Naive thymus-derived CD4-positive, alpha-beta T cell (primary cell): ENCODE measurements at regions of chr15 and their contacts with region 1.

Region 1: GRCh38 chr15:88467073-88467934 is at the starts of genes MRPL46 and MRPS11:
- DNase-seq: peak; percentile 78 to 94 (median 91)
- ATAC-seq: peak; percentile 97
- H3K4me3 ChIP-seq: peak within 1 kb of the TSS; percentile 75
- H3K4me3 Mint-ChIP-seq: peak within 1 kb of the TSS; percentile 87 to 98 (median 97)
- H3K27ac ChIP-seq: peak within 1 kb of the TSS; percentile 95
- H3K27ac Mint-ChIP-seq: peak within 1 kb of the TSS; percentile 96 to 99 (median 98)
- H3K4me1 ChIP-seq: peaks cover 0 to 19% of the 10 kb centered on the region in 2 donors
- H3K4me1 Mint-ChIP-seq: peaks cover 18 to 42% (median 29%) of the 10 kb centered on the region in 7 donors
- H3K27me3 ChIP-seq: no peaks in the 10 kb centered on the region
- H3K27me3 Mint-ChIP-seq: no peaks in the 10 kb centered on the region
- total RNA-seq, gene MRPL46: 9.2 to 32.1 (median 28.5) TPM
- total RNA-seq, gene MRPS11: 12.8 to 55.7 (median 24.0) TPM

Region 2: GRCh38 chr15:88077296-88078020 is 389.8 kb before region 1 on chr15:
- CTCF ChIA-PET with region 1: no interaction called
- POLR2A ChIA-PET with region 1: no interaction called
- intact Hi-C with region 1: no loop called
- DNase-seq: no peak
- ATAC-seq: no peak
- H3K4me3 ChIP-seq: no peak overlapping the region
- H3K4me3 Mint-ChIP-seq: no peak overlapping the region
- H3K27ac ChIP-seq: no peak overlapping the region
- H3K27ac Mint-ChIP-seq: no peak overlapping the region
- H3K4me1 ChIP-seq: no peaks in the 10 kb centered on the region
- H3K4me1 Mint-ChIP-seq: no peaks in the 10 kb centered on the region
- H3K27me3 ChIP-seq: no peaks in the 10 kb centered on the region
- H3K27me3 Mint-ChIP-seq: peaks cover 0 to 15% (median 6%) of the 10 kb centered on the region in 5 donors

Region 3: DNA sequence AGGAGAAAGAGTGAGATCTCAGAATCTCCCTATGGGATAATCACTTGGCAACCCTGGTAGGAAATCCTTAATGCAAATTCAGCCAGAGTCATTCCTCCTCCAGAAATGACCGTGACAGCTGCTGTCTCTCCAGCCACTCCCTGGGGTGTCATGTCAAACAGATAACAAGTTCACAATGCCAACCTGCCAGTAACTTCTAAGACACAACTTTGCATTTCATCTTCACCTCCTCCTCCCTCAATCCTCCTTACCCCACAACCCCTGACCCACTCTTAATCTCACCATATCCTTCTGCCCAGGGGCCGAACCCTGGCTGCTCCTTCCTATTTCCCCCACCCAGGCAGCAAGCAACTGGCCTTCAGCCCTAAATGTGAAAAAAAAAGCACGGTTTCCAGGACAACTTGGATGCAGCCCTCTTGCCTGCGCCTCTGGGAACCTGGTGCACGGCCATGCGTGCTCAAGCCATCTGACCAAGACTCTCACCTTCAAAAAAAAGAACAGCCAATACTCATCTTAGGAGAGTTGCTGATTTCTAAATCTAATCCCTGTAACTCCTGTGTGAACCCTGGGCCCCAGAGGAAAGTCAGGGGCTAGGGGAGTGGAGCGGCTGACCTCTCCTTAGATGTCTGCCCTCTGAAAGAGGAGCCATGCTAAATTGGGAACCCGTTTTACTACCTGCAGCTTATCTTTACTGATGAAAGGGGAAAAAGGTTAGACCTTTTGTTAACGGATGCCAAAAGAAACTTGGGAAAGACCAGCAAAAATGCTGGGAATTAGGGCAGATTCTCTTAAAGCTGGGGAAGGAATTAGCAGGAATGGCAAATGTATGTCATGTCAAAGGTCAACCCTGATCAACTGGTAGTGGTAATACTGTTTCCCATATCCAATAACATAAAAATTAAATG is 376.6 kb before region 1 on chr15:
- CTCF ChIA-PET with region 1: no interaction called
- POLR2A ChIA-PET with region 1: no interaction called
- intact Hi-C with region 1: no loop called
- DNase-seq: no peak
- ATAC-seq: no peak
- H3K4me3 ChIP-seq: no peak overlapping the region
- H3K4me3 Mint-ChIP-seq: no peak overlapping the region
- H3K27ac ChIP-seq: no peak overlapping the region
- H3K27ac Mint-ChIP-seq: no peak overlapping the region
- H3K4me1 ChIP-seq: no peaks in the 10 kb centered on the region
- H3K4me1 Mint-ChIP-seq: no peaks in the 10 kb centered on the region
- H3K27me3 ChIP-seq: peaks cover 0 to 5% of the 10 kb centered on the region in 2 donors
- H3K27me3 Mint-ChIP-seq: peaks cover 0 to 13% (median 10%) of the 10 kb centered on the region in 5 donors

Region 4: GRCh38 chr15:88454867-88455810 is 12.2 kb before region 1 on chr15:
- CTCF ChIA-PET with region 1: interaction called, 4 read pairs
- POLR2A ChIA-PET with region 1: interaction called, 10 read pairs
- intact Hi-C with region 1: loop called in 1 of 2 experiments (anchors 1 kb)
- DNase-seq: peak in 6 of 9 donors; percentile 14 to 38 (median 26)
- ATAC-seq: peak; percentile 85
- H3K4me3 ChIP-seq: no peak overlapping the region
- H3K4me3 Mint-ChIP-seq: no peak overlapping the region
- H3K27ac ChIP-seq: no peak overlapping the region
- H3K27ac Mint-ChIP-seq: peak overlapping the region in 4 of 9 donors; percentile 10 to 72 (median 54)
- H3K4me1 ChIP-seq: no peaks in the 10 kb centered on the region
- H3K4me1 Mint-ChIP-seq: peaks cover 1 to 9% (median 4%) of the 10 kb centered on the region in 7 donors
- H3K27me3 ChIP-seq: no peaks in the 10 kb centered on the region
- H3K27me3 Mint-ChIP-seq: no peaks in the 10 kb centered on the region

Region 5: DNA sequence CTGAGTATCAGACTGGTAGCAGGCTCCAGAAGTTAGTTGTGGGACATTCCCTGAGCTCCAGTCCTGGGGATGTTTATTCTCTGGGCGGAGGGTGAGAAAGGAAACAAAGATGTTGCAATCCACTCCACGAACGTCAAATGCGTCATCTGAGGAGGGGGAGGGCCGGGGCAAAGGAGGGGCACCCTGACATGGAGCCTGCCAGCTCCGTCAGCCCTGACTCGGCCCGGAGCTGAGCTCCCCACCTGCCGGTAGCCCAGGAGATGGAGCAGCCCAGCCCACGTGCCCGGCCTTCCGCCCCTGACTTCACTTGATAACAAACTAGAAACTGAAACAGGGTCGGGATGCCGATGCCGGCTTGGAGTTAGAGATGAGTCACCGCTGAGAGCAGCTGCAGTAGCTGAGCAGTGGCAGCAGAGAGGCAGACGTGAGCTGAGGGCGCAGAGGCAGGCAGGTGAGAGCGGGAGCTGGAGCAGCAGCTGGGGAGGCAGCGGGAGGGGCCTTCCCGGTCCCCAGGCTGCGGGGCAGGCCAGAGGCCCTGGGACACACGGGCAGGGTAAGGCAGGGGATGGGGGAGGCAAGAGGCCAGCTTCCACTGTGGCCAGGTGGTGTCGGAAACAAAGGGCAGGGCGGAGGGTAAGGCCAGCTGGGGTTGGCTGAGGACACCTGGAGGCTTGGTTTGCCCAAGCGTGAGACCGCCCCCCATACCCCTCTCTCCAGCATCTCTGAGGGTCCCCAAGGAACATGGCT is 171.5 kb after region 1 on chr15 and contains the start of gene ISG20:
- CTCF ChIA-PET with region 1: no interaction called
- POLR2A ChIA-PET with region 1: interaction called, 11 read pairs
- intact Hi-C with region 1: loop called (anchors 1 kb)
- DNase-seq: peak; percentile 84 to 100 (median 99)
- ATAC-seq: peak; percentile 94
- H3K4me3 ChIP-seq: peak within 1 kb of the TSS; percentile 70
- H3K4me3 Mint-ChIP-seq: peak within 1 kb of the TSS; percentile 83 to 99 (median 94)
- H3K27ac ChIP-seq: peak within 1 kb of the TSS; percentile 99
- H3K27ac Mint-ChIP-seq: peak within 1 kb of the TSS; percentile 96 to 100 (median 99)
- H3K4me1 ChIP-seq: peaks cover 76 to 81% of the 10 kb centered on the region in 2 donors
- H3K4me1 Mint-ChIP-seq: peaks cover 58 to 87% (median 80%) of the 10 kb centered on the region in 7 donors
- H3K27me3 ChIP-seq: no peaks in the 10 kb centered on the region
- H3K27me3 Mint-ChIP-seq: peaks cover 0 to 2% (median 0%) of the 10 kb centered on the region in 5 donors
- total RNA-seq, gene ISG20: 92.5 to 160 (median 149) TPM

Region 6: GRCh38 chr15:88904624-88905327 is 437.5 kb after region 1 on chr15:
- CTCF ChIA-PET with region 1: no interaction called
- POLR2A ChIA-PET with region 1: no interaction called
- intact Hi-C with region 1: loop called in 1 of 2 experiments (anchors 2 kb)
- DNase-seq: peak; percentile 79 to 99 (median 98)
- ATAC-seq: peak; percentile 99
- H3K4me3 ChIP-seq: no peak overlapping the region
- H3K4me3 Mint-ChIP-seq: peak overlapping the region; percentile 16 to 78 (median 54)
- H3K27ac ChIP-seq: peak overlapping the region; percentile 70
- H3K27ac Mint-ChIP-seq: peak overlapping the region; percentile 76 to 98 (median 94)
- H3K4me1 ChIP-seq: peaks cover 19 to 37% of the 10 kb centered on the region in 2 donors
- H3K4me1 Mint-ChIP-seq: peaks cover 23 to 65% (median 52%) of the 10 kb centered on the region in 7 donors
- H3K27me3 ChIP-seq: no peaks in the 10 kb centered on the region
- H3K27me3 Mint-ChIP-seq: no peaks in the 10 kb centered on the region

Region 7: DNA sequence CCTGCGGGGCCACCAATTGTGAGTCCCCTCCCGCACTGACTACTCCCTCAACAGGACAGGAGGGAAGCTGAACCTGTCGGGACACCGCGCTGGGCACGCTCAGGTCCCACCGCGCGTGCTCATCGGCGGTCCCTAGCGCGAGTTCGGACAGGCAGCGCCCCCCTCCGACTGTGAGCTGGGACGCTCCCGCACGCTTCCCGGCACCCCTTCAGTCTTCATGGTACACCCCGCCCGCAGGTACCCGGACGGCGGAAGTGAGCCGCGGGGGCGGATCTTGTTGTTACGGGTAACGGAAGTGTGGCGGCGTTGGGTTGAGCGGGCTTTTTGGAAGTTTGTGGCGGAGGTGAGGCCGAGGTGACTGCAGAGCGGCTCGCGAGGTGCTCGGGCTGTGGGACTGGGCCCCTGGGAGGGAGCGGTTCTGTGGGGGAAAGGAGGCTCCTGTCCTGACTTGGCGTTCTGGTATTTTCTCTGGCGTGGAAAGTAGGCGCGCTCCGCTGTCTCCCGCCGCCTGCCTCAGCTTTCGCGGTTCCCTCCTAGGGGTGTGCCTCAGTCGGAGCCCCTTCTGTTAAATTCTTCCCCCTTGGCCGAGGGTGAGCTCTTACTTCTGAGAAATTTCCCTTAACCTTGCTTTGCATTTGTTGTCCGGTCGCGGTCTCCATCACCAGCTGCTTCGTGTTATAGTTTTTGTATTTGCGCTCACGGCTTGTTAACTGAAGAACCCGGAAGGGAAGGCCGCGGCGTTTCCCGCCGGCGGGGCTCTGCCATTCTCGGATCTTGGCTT is 776.6 kb after region 1 on chr15 and contains the start of gene FANCI:
- CTCF ChIA-PET with region 1: no interaction called
- POLR2A ChIA-PET with region 1: no interaction called
- intact Hi-C with region 1: loop called in 1 of 2 experiments (anchors 2 kb)
- DNase-seq: peak; percentile 89 to 97 (median 94)
- ATAC-seq: peak; percentile 100
- H3K4me3 ChIP-seq: peak within 1 kb of the TSS; percentile 79
- H3K4me3 Mint-ChIP-seq: peak within 1 kb of the TSS; percentile 86 to 98 (median 94)
- H3K27ac ChIP-seq: peak within 1 kb of the TSS; percentile 65
- H3K27ac Mint-ChIP-seq: peak within 1 kb of the TSS; percentile 78 to 96 (median 84)
- H3K4me1 ChIP-seq: peaks cover 6 to 13% of the 10 kb centered on the region in 2 donors
- H3K4me1 Mint-ChIP-seq: peaks cover 20 to 40% (median 26%) of the 10 kb centered on the region in 7 donors
- H3K27me3 ChIP-seq: no peaks in the 10 kb centered on the region
- H3K27me3 Mint-ChIP-seq: peaks cover 0 to 8% (median 0%) of the 10 kb centered on the region in 5 donors
- total RNA-seq, gene FANCI: 8.0 to 132 (median 9.7) TPM